ENCODE measurements at regions of chr12 and their contacts with region 1.

Region 1: DNA sequence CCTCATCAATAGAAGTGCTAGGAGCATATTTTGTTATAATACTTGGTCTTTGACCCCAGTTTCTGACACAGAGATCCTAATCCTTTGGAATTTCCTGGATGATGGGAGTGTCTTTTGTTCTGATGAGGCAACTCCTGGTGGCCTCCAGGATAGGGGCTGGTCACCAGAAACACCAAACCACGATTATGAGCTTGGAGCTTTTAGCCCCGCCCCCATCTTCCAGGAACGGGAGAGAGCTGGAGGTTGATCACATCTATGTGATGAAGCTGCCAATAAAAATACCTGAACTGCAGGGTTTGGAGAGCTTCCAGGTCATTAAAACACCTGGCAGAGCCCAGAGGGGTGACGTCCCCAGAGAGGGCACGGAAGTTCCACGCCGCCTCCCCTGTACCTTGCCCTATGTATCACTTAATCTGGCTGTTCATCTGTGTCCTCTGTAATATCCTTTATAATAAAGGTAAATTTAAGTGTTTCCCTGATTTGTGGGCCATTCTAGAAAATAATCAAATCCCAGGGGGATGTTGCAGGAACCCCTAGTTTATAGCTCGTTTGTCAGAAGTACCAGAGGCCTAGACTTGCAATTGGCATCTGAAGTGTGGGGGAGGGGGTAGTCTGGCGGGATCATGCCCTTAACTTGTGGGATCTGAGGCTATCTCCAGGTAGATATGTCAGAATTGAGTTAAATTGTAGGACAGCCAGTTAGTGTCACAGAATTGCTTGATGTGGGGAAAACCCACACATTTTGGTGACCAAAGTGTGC is 21.2 kb downstream of the APPL2 start:
- DNase-seq: peak; percentile 100
- ATAC-seq: peak; percentile 83
- H3K4me3 ChIP-seq: peak overlapping the region; percentile 66
- H3K27ac ChIP-seq: peak overlapping the region; percentile 98
- H3K4me1 ChIP-seq: peaks cover 55% of the 10 kb centered on the region
- H3K27me3 ChIP-seq: no peaks in the 10 kb centered on the region
- CTCF ChIP-seq: no peak

Region 2: DNA sequence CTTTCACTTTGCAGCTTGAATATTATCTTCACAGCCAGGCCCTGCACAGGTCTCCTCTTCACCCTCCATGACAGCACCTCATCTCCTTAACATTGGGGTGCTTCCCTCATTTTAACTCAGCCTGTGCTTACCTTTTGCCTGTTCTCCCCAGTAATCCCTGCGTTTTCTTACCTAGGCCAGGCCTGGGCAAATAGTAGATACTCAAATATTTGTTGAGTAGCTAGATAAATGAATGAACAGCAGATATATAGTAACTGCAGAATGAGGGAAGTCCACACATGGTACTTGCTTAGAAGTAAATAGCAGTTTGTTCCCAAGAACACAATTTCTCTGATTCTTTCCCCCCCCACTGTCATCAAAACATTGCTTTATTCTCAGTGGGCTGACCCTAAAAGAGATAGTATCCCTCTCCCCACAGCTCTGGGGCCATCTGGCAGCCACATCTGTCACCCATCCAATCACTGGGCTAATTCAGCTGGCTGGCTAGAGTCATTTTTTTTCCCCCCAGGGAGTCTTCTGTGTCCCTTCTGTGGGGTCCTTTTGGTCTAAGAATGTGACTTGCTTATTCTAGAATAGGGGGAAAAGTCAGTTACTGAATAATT is 22.1 kb before region 1 on chr12:
- CTCF ChIA-PET with region 1: no interaction called
- POLR2A ChIA-PET with region 1: no interaction called
- intact Hi-C with region 1: loop called (anchors 1 kb)
- DNase-seq: no peak
- ATAC-seq: no peak
- H3K4me3 ChIP-seq: no peak overlapping the region
- H3K27ac ChIP-seq: no peak overlapping the region
- H3K4me1 ChIP-seq: no peaks in the 10 kb centered on the region
- H3K27me3 ChIP-seq: no peaks in the 10 kb centered on the region
- CTCF ChIP-seq: no peak

Region 3: GRCh38 chr12:105235732-105236476 is 21.1 kb after region 1 on chr12 and contains the start of gene APPL2:
- CTCF ChIA-PET with region 1: no interaction called
- POLR2A ChIA-PET with region 1: interaction called, 8 read pairs
- intact Hi-C with region 1: loop called (anchors 1 kb)
- DNase-seq: peak; percentile 92
- ATAC-seq: peak; percentile 90
- H3K4me3 ChIP-seq: peak within 1 kb of the TSS; percentile 85
- H3K27ac ChIP-seq: peak within 1 kb of the TSS; percentile 60
- H3K4me1 ChIP-seq: peaks cover 26% of the 10 kb centered on the region
- H3K27me3 ChIP-seq: no peaks in the 10 kb centered on the region
- CTCF ChIP-seq: peak; percentile 50
- total RNA-seq, gene APPL2: 36.2 and 42.2 TPM in 2 replicates

Region 4: GRCh38 chr12:105279460-105280056 is 64.8 kb after region 1 on chr12:
- CTCF ChIA-PET with region 1: no interaction called
- POLR2A ChIA-PET with region 1: no interaction called
- intact Hi-C with region 1: loop called (anchors 2 kb)
- DNase-seq: no peak
- ATAC-seq: no peak
- H3K4me3 ChIP-seq: no peak overlapping the region
- H3K27ac ChIP-seq: no peak overlapping the region
- H3K4me1 ChIP-seq: peaks cover 14% of the 10 kb centered on the region
- H3K27me3 ChIP-seq: no peaks in the 10 kb centered on the region
- CTCF ChIP-seq: peak; percentile 72

Region 5: DNA sequence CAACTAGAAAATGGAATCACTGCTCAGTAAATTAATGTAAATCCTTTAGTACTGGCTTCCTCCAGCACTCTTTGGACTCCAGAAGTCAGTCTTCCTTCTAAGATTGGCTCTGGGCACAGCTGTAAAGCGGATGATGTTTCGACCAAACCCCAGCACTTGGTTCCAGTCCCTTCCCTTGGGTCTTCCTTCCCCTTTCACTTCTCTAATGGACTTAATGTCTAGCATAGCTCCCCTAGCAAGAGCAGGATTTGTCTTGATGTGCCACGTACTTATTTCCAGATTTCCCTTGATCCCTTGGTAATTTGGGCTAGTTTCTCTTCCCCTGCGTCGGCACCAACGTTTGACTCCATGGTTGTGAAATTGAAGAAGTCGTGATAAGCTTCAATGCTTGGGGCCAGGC is 144.0 kb after region 1 on chr12:
- CTCF ChIA-PET with region 1: no interaction called
- POLR2A ChIA-PET with region 1: no interaction called
- intact Hi-C with region 1: no loop called
- DNase-seq: no peak
- ATAC-seq: no peak
- H3K4me3 ChIP-seq: no peak overlapping the region
- H3K27ac ChIP-seq: no peak overlapping the region
- H3K4me1 ChIP-seq: peaks cover 14% of the 10 kb centered on the region
- H3K27me3 ChIP-seq: no peaks in the 10 kb centered on the region
- CTCF ChIP-seq: no peak

Region 6: DNA sequence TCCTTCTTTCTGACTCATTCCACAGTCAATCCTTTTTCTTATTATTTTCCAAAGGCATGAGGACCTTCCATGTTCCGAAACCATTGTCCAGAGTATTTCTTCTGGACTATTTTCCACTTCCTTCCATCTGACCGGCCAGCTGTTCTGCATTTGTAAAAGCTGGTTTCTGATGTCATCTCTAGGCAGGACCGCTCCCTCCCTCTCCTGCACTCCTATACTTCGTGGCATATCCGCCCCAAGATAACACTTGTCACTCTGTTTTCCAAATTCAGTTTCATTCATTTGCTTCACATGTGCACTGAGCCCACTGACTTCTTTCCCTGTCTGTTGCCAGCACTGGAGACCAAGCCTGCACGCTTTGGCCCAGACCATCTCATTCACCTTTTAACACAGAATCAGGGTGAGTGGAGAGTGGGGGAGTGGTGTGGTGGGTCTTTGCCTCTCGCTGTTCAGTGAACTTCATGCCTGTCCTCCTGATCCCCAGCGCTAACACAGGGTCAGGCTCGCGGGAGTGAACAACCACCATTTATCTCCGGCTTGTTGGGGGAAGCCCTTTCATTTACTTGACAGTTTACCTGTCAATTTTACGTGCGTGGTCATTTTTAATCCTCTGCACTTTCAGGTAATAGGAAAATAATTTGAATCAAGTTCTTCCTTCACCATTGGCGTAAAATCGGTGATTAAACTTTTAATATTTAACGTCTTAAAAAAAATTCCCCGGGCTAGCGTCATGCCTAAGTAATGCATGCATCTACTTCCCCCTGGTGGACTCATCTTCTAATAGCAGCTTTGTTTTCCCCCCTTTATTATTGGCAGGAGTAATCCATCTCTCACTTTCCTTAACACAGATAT is 168.2 kb after region 1 on chr12:
- CTCF ChIA-PET with region 1: no interaction called
- POLR2A ChIA-PET with region 1: no interaction called
- intact Hi-C with region 1: loop called (anchors 1 kb)
- DNase-seq: peak; percentile 89
- ATAC-seq: peak; percentile 75
- H3K4me3 ChIP-seq: peak overlapping the region; percentile 63
- H3K27ac ChIP-seq: no peak overlapping the region
- H3K4me1 ChIP-seq: peaks cover 10% of the 10 kb centered on the region
- H3K27me3 ChIP-seq: no peaks in the 10 kb centered on the region
- CTCF ChIP-seq: peak; percentile 94

Region 7: GRCh38 chr12:106282457-106283097 is 1067.8 kb after region 1 on chr12:
- CTCF ChIA-PET with region 1: no interaction called
- POLR2A ChIA-PET with region 1: no interaction called
- intact Hi-C with region 1: loop called (anchors 10 kb)
- DNase-seq: peak; percentile 78
- ATAC-seq: peak; percentile 71
- H3K4me3 ChIP-seq: no peak overlapping the region
- H3K27ac ChIP-seq: no peak overlapping the region
- H3K4me1 ChIP-seq: peaks cover 33% of the 10 kb centered on the region
- H3K27me3 ChIP-seq: no peaks in the 10 kb centered on the region
- CTCF ChIP-seq: peak; percentile 94